Mammary epithelial cell (primary cell): ENCODE measurements at regions of chr1 and their contacts with region 1.

Region 1: GRCh38 chr1:186842547-186842946 is 13.8 kb downstream of the PLA2G4A start:
- DNase-seq: no peak
- H3K4me3 ChIP-seq: no peak overlapping the region
- H3K27ac ChIP-seq: no peak overlapping the region
- H3K4me1 ChIP-seq: no peaks in the 10 kb centered on the region
- H3K27me3 ChIP-seq: no peaks in the 10 kb centered on the region
- CTCF ChIP-seq: no peak

Region 2: DNA sequence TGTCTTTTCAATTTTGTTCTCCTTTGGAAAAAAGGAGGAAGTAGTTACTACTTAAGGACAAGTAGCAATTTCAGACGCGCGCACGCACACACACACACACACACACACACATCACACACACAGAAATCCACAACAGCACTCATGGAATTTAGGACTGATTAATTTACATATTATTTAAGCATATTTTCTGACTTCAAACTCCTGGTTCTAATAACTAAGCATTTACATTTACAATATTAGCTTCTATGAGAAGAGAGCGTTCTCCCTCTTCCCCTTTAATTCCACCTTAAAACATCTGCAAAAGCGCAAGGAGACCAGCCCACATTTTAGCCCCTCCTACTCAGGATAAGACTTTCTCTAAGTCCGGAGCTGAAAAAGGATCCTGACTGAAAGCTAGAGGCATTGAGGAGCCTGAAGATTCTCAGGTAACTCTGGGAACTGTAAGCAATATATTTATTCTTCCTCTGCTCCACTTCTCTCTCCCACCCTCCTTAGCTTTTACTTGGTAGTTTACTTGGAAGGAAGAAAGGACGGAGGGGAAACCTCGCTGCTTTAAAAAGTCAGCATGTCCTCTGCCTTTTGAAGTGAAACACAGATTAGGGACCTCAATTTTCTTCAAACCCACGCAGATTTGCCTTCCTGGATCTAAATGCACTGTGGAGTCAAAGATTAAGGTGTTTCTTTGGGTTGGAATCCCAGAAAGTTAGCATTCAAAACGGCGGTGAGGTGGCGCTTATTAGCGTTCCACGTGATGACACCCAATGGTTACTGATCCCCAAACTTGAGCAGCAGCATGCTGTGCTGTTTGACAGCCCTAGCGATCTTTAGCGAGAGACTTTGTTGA is 13.7 kb before region 1 on chr1 and contains the start of gene PLA2G4A:
- CTCF ChIA-PET with region 1: no interaction called
- dilution Hi-C with region 1: no loop called
- in situ Hi-C with region 1: no loop called
- intact Hi-C with region 1: loop called (anchors 1 kb)
- DNase-seq: peak; percentile 78
- H3K4me3 ChIP-seq: peak within 1 kb of the TSS; percentile 52 to 99 (median 99)
- H3K27ac ChIP-seq: peak within 1 kb of the TSS; percentile 77
- H3K4me1 ChIP-seq: no peaks in the 10 kb centered on the region
- H3K27me3 ChIP-seq: no peaks in the 10 kb centered on the region
- CTCF ChIP-seq: no peak
- total RNA-seq, gene PLA2G4A: 7.3 to 7.8 TPM